Ascending aorta (tissue), 2 donors: ENCODE measurements at regions of chr1 and their contacts with region 1.

Region 1: GRCh38 chr1:21508580-21509350 is 458 bp upstream of the ALPL start:
- DNase-seq: no peak
- H3K4me3 ChIP-seq: peak overlapping the region; percentile 44 to 53
- H3K27ac ChIP-seq: no peak overlapping the region
- H3K4me1 ChIP-seq: peaks cover 4 to 5% of the 10 kb centered on the region in 2 donors
- H3K27me3 ChIP-seq: peaks cover 9% of the 10 kb centered on the region
- CTCF ChIP-seq: peak; percentile 16 to 46 (median 42)

Region 2: GRCh38 chr1:21573971-21574465 is 65.3 kb after region 1 on chr1:
- intact Hi-C with region 1: no loop called
- DNase-seq: peak in 1 of 2 donors; percentile 70
- H3K4me3 ChIP-seq: no peak overlapping the region
- H3K27ac ChIP-seq: no peak overlapping the region
- H3K4me1 ChIP-seq: peaks cover 0 to 8% of the 10 kb centered on the region in 2 donors
- H3K27me3 ChIP-seq: no peaks in the 10 kb centered on the region
- CTCF ChIP-seq: peak in 2 of 3 experiments; percentile 25 to 47

Region 3: GRCh38 chr1:21659099-21659923 is 150.5 kb after region 1 on chr1:
- intact Hi-C with region 1: loop called (anchors 2 kb)
- DNase-seq: peak in 1 of 2 donors; percentile 79
- H3K4me3 ChIP-seq: peak overlapping the region in 1 of 2 donors; percentile 25
- H3K27ac ChIP-seq: no peak overlapping the region
- H3K4me1 ChIP-seq: no peaks in the 10 kb centered on the region
- H3K27me3 ChIP-seq: no peaks in the 10 kb centered on the region
- CTCF ChIP-seq: peak; percentile 83 to 93 (median 90)